Activated CD4-positive, alpha-beta T cell treated with anti-CD3 and anti-CD28 coated beads, Interleukin-2, amount 10 ng/mL, durations not matched to agents 24 days and 14 days (primary cell): ENCODE measurements at regions of chr9 and their contacts with region 1.

Region 1: GRCh38 chr9:25964239-25964638 is 286.0 kb upstream of the TUSC1 start:
- DNase-seq: no peak
- H3K4me3 Mint-ChIP-seq: no peak overlapping the region
- H3K27ac Mint-ChIP-seq: no peak overlapping the region
- H3K4me1 Mint-ChIP-seq: no peaks in the 10 kb centered on the region
- H3K27me3 Mint-ChIP-seq: no peaks in the 10 kb centered on the region

Region 2: DNA sequence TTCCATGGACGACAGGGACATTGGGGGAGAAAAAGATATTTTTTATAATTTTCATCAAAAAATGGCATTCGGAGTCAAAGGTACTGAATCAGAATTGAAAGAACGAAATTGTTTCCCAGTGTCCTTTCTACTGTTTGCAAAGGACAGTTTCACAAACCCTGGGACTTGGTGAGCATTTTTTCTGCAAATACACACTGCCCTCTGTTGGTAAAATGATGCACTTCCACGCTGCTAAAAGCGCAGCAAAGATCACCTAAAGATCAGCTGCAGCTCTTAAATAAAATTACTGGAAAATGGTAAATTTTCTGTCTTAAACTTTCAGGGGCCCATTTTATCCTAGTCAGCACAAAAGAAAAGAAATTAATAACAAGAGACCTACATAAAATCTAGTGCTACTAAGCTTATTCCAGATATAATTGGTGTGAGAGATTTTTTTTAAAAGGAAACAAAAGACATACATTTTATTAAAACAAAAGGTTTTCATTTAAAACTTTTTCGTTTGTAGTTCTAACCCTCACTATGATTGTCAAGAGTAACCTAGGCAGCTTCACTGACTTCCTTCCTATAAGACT is 362.3 kb after region 1 on chr9:
- intact Hi-C with region 1: loop called (anchors 2 kb)
- DNase-seq: peak; percentile 61
- H3K4me3 Mint-ChIP-seq: no peak overlapping the region
- H3K27ac Mint-ChIP-seq: no peak overlapping the region
- H3K4me1 Mint-ChIP-seq: no peaks in the 10 kb centered on the region
- H3K27me3 Mint-ChIP-seq: no peaks in the 10 kb centered on the region